Gastrocnemius medialis (tissue), 4 donors: ENCODE measurements at regions of chr22 and their contacts with region 1.

Region 1: GRCh38 chr22:24768537-24769374 is 5.8 kb downstream of the PIWIL3 start:
- DNase-seq: peak; percentile 5 to 16
- ATAC-seq: peak in 1 of 2 donors; percentile 81
- H3K4me3 ChIP-seq: no peak overlapping the region
- H3K27ac ChIP-seq: no peak overlapping the region
- H3K4me1 ChIP-seq: no peaks in the 10 kb centered on the region
- H3K27me3 ChIP-seq: peaks cover 3 to 13% (median 3%) of the 10 kb centered on the region in 3 donors
- CTCF ChIP-seq: peak; percentile 10 to 70 (median 49)
- POLR2A ChIP-seq: no peak

Region 2: GRCh38 chr22:24433813-24434470 is 334.8 kb before region 1 on chr22:
- in situ Hi-C with region 1: loop called in 1 of 4 experiments (anchors 25 kb)
- intact Hi-C with region 1: no loop called
- DNase-seq: peak in 1 of 2 donors; percentile 20
- ATAC-seq: peak; percentile 13 to 24
- H3K4me3 ChIP-seq: no peak overlapping the region
- H3K27ac ChIP-seq: peak overlapping the region; percentile 47 to 65 (median 57)
- H3K4me1 ChIP-seq: peaks cover 30 to 31% of the 10 kb centered on the region in 2 donors
- H3K27me3 ChIP-seq: no peaks in the 10 kb centered on the region
- CTCF ChIP-seq: no peak
- POLR2A ChIP-seq: no peak

Region 3: GRCh38 chr22:24803011-24803542 is 34.3 kb after region 1 on chr22:
- in situ Hi-C with region 1: no loop called
- intact Hi-C with region 1: loop called (anchors 5 kb)
- DNase-seq: no peak
- ATAC-seq: peak in 1 of 2 donors; percentile 41
- H3K4me3 ChIP-seq: no peak overlapping the region
- H3K27ac ChIP-seq: no peak overlapping the region
- H3K4me1 ChIP-seq: no peaks in the 10 kb centered on the region
- H3K27me3 ChIP-seq: no peaks in the 10 kb centered on the region
- CTCF ChIP-seq: peak; percentile 51 to 85 (median 62)
- POLR2A ChIP-seq: no peak

Region 4: DNA sequence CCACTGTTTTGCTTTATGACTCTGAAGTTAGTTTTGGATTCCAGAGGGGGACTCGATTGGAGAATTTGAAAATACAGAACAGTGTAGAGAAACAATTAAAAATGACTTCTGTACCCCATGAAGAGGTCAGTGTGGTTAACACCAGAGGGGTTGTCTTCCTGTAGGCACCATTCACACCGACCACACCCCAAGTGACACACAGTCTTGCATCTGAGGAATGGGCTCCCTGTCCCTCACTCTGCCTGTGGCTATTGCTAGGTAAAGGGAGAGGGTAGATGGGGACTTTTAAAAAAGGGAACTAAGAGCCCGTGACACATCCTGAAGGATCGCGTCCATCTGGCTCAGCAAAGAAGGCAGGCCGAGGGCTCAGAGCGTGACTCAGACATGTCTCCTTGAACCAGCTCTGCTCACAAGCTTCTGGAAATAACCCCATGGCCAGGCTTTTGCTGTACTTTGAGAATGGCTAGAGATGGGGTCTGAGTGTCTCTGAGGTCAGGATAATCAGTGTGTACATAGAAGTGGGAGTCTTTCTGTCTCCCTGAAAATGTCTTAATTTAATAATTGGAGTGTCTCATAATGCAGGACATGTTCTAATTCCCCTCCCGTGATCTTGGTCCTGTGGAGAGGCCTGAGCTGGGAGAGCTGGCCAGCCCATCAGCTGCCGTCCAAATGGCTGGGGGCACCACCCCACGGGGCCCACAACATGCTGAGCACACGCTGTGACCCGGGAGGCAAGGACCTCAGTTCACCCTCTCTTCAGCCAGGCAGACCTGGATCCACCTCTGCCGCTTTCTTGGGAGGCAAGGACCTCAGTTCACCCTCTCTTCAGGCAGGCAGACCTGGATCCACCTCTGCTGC is 76.5 kb after region 1 on chr22:
- in situ Hi-C with region 1: no loop called
- intact Hi-C with region 1: loop called (anchors 5 kb)
- DNase-seq: peak; percentile 11 to 33
- ATAC-seq: peak; percentile 46 to 83
- H3K4me3 ChIP-seq: no peak overlapping the region
- H3K27ac ChIP-seq: no peak overlapping the region
- H3K4me1 ChIP-seq: no peaks in the 10 kb centered on the region
- H3K27me3 ChIP-seq: peaks cover 0 to 3% (median 0%) of the 10 kb centered on the region in 3 donors
- CTCF ChIP-seq: no peak
- POLR2A ChIP-seq: no peak

Region 5: GRCh38 chr22:25048659-25049647 is 280.2 kb after region 1 on chr22:
- in situ Hi-C with region 1: loop called in 1 of 4 experiments (anchors 10 kb)
- intact Hi-C with region 1: no loop called
- DNase-seq: peak; percentile 27 to 46
- ATAC-seq: peak; percentile 71 to 84
- H3K4me3 ChIP-seq: no peak overlapping the region
- H3K27ac ChIP-seq: no peak overlapping the region
- H3K4me1 ChIP-seq: no peaks in the 10 kb centered on the region
- H3K27me3 ChIP-seq: no peaks in the 10 kb centered on the region
- CTCF ChIP-seq: peak; percentile 81 to 86 (median 84)
- POLR2A ChIP-seq: no peak

Region 6: DNA sequence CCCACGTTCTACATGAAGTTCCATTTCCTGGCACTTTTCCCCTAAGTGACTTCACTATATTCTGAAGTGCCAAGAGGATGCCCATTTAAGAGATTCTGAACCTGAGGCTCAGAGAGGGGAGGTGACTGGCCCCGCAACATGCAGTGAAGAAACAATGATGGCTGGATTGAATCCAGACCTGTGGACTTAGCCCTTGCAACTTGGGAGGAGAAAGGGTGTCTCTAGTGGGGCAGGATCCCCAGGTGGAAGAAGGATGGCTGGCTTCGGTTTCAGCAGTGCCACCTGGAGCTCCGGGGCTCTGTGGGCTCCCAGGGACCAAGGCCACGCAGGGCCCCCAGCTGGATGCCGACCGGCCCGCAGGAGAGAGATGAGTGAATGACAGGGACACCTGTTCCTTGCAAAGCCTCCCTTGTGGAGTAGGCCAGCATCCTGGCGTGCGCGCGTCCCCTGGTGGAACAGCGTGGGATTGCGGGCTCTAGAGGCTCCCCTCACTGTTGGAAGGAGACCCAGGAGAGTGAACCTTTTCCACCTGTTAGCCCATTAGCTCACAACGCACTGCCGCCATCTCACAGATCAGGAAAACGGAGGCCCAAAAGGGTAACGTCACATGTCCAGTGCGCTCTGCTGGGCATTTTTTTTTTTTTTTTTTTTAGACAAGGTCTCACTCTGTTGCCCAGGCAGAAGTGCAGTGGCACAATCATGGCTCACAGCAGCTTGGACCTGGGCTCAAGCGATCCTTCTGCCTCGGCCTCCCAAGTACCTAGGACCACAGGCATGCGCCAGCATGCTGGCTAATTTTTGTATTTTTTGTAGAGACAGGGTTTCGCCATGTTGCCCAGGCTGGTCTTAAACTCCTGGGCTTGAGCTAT is 288.5 kb after region 1 on chr22:
- in situ Hi-C with region 1: no loop called
- intact Hi-C with region 1: loop called (anchors 5 kb)
- DNase-seq: peak; percentile 37 to 66
- ATAC-seq: peak; percentile 75 to 84
- H3K4me3 ChIP-seq: no peak overlapping the region
- H3K27ac ChIP-seq: no peak overlapping the region
- H3K4me1 ChIP-seq: no peaks in the 10 kb centered on the region
- H3K27me3 ChIP-seq: no peaks in the 10 kb centered on the region
- CTCF ChIP-seq: peak; percentile 71 to 89 (median 86)
- POLR2A ChIP-seq: no peak